GM12878 (cell line): ENCODE measurements at regions of chr12 and their contacts with region 1.

Region 1: DNA sequence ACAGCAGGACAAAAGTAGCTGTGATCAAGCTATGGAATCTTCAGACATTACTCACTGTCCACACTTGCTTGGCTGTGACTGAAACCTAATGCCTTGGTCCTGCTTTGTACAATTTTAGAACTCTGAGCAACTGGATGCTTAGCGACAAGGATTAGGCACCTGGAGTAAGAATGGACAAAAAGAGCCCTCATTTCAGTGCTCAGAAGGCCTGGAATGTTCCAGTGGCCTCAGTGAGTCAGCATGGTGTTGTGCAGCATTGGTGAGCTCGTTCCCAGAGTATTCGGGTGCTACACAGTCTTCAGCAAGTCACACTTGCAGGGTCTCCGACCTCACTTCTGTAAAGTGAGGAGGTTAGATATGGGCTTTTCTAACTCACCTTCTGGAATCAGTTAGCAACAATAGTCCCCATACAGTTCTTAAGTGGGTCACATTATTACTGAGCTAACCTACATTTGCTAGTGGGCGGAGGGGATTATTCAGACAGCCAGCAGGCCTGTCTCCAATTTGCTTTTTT is 108.0 kb upstream of the MDM1 start:
- DNase-seq: no peak
- ATAC-seq: peak; percentile 38
- H3K4me3 ChIP-seq: no peak overlapping the region
- H3K27ac ChIP-seq: no peak overlapping the region
- H3K4me1 ChIP-seq: peaks cover 7% of the 10 kb centered on the region
- H3K27me3 ChIP-seq: no peaks in the 10 kb centered on the region
- CTCF ChIP-seq: no peak
- EP300 ChIP-seq: no peak
- POLR2A ChIP-seq: no peak
- RAD21 ChIP-seq: no peak

Region 2: GRCh38 chr12:68364893-68365725 is 75.0 kb before region 1 on chr12:
- CTCF ChIA-PET with region 1: interaction called, 14 read pairs
- POLR2A ChIA-PET with region 1: interaction called, 16 read pairs
- RAD21 ChIA-PET with region 1: interaction called, 37 read pairs
- SMC1A ChIA-PET with region 1: interaction called, 21 read pairs
- in situ Hi-C with region 1: no loop called
- intact Hi-C with region 1: loop called (anchors 5 kb)
- DNase-seq: peak; percentile 97
- ATAC-seq: peak; percentile 89
- H3K4me3 ChIP-seq: peak overlapping the region; percentile 53
- H3K27ac ChIP-seq: peak overlapping the region; percentile 94
- H3K4me1 ChIP-seq: peaks cover 23% of the 10 kb centered on the region
- H3K27me3 ChIP-seq: no peaks in the 10 kb centered on the region
- CTCF ChIP-seq: no peak
- EP300 ChIP-seq: peak; percentile 52 to 59; a peak in 3 of 4 replicates
- POLR2A ChIP-seq: peak; percentile 79
- RAD21 ChIP-seq: peak; percentile 10; the same call in 1 of the 2 replicates

Region 3: DNA sequence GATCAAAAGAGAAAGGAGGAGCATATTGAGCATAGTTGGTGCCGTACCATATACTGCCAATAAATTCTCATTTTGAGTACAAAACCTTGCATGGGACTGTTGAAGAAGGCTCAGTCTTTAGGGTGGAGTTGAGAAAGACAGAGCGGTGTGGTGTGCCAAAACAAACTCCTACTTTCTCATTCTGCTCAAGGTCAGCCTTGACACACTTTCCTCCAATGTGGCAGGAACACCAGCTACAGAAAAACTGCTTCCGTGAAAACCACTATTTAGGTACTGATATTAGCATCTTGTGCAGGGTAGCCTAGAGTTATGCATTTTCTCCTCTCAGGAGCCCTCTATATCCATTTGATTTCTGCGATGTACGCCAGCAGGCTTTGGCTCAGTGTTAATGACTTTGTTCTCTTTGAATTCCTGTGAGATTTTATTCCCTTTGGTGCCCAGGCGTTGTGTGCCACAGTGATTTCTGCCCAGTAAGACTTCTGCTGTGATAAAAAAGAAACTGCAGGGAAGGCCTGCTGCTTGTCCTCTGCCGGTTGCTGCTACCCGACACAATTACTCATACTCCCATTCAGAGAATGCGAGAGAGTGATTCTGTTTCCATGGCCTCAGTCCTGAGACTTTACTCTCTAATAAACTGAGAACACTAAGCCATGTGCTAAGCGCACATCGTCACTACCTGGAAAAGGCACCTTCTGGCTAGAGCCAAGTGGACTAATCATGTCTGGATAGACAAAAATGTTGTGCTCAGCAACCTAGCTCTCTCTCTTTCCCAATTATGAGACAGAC is 19.7 kb before region 1 on chr12:
- CTCF ChIA-PET with region 1: interaction called, 5 read pairs
- POLR2A ChIA-PET with region 1: interaction called, 8 read pairs
- RAD21 ChIA-PET with region 1: interaction called, 41 read pairs
- SMC1A ChIA-PET with region 1: interaction called, 81 read pairs
- in situ Hi-C with region 1: no loop called
- intact Hi-C with region 1: no loop called
- DNase-seq: no peak
- ATAC-seq: no peak
- H3K4me3 ChIP-seq: no peak overlapping the region
- H3K27ac ChIP-seq: no peak overlapping the region
- H3K4me1 ChIP-seq: no peaks in the 10 kb centered on the region
- H3K27me3 ChIP-seq: no peaks in the 10 kb centered on the region
- CTCF ChIP-seq: no peak
- EP300 ChIP-seq: no peak
- POLR2A ChIP-seq: no peak
- RAD21 ChIP-seq: no peak

Region 4: GRCh38 chr12:68451261-68452077 is 11.3 kb after region 1 on chr12:
- CTCF ChIA-PET with region 1: interaction called, 4 read pairs
- POLR2A ChIA-PET with region 1: interaction called, 30 read pairs
- RAD21 ChIA-PET with region 1: interaction called, 23 read pairs
- SMC1A ChIA-PET with region 1: interaction called, 20 read pairs
- in situ Hi-C with region 1: no loop called
- intact Hi-C with region 1: no loop called
- DNase-seq: peak; percentile 88
- ATAC-seq: peak; percentile 78
- H3K4me3 ChIP-seq: peak overlapping the region; percentile 51
- H3K27ac ChIP-seq: peak overlapping the region; percentile 73
- H3K4me1 ChIP-seq: peaks cover 36% of the 10 kb centered on the region
- H3K27me3 ChIP-seq: no peaks in the 10 kb centered on the region
- CTCF ChIP-seq: no peak
- EP300 ChIP-seq: peak; percentile 32 to 50; a peak in 2 of 4 replicates
- POLR2A ChIP-seq: no peak
- RAD21 ChIP-seq: no peak

Region 5: DNA sequence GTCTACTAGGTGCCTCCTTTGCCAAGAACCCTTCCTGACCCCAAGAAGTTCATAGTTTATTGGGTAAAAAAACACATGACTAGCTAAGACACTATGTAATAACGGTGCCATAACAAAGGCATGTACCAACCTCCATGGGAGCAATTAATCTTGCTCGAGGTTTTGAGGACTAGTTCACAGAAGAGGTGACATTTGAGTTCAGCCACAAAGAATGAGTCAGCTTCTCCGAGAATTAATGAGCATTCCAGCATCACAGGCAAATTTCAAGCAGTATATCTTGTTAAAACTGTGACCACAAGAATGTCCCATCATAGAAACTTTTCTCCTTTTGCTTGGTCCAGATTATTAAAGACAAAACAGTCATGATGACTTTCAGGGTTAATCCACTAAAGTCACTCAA is 57.6 kb after region 1 on chr12:
- CTCF ChIA-PET with region 1: interaction called, 6 read pairs
- POLR2A ChIA-PET with region 1: no interaction called
- RAD21 ChIA-PET with region 1: interaction called, 8 read pairs
- SMC1A ChIA-PET with region 1: interaction called, 10 read pairs
- in situ Hi-C with region 1: no loop called
- intact Hi-C with region 1: no loop called
- DNase-seq: peak; percentile 50
- ATAC-seq: peak; percentile 82
- H3K4me3 ChIP-seq: no peak overlapping the region
- H3K27ac ChIP-seq: no peak overlapping the region
- H3K4me1 ChIP-seq: peaks cover 27% of the 10 kb centered on the region
- H3K27me3 ChIP-seq: no peaks in the 10 kb centered on the region
- CTCF ChIP-seq: no peak
- EP300 ChIP-seq: no peak
- POLR2A ChIP-seq: no peak
- RAD21 ChIP-seq: no peak

Region 6: GRCh38 chr12:68538726-68539614 is 98.8 kb after region 1 on chr12:
- CTCF ChIA-PET with region 1: interaction called, 4 read pairs
- POLR2A ChIA-PET with region 1: no interaction called
- RAD21 ChIA-PET with region 1: interaction called, 4 read pairs
- SMC1A ChIA-PET with region 1: interaction called, 10 read pairs
- in situ Hi-C with region 1: no loop called
- intact Hi-C with region 1: no loop called
- DNase-seq: peak; percentile 59
- ATAC-seq: peak; percentile 96
- H3K4me3 ChIP-seq: no peak overlapping the region
- H3K27ac ChIP-seq: no peak overlapping the region
- H3K4me1 ChIP-seq: peaks cover 3% of the 10 kb centered on the region; the same call in 1 of the 2 replicates
- H3K27me3 ChIP-seq: no peaks in the 10 kb centered on the region
- CTCF ChIP-seq: no peak
- EP300 ChIP-seq: peak in 1 of 2 experiments; percentile 77; a peak in 1 of 4 replicates
- POLR2A ChIP-seq: no peak
- RAD21 ChIP-seq: no peak

Region 7: GRCh38 chr12:68565375-68565903 is 125.3 kb after region 1 on chr12:
- CTCF ChIA-PET with region 1: no interaction called
- POLR2A ChIA-PET with region 1: no interaction called
- RAD21 ChIA-PET with region 1: no interaction called
- SMC1A ChIA-PET with region 1: no interaction called
- in situ Hi-C with region 1: no loop called
- intact Hi-C with region 1: no loop called
- DNase-seq: no peak
- ATAC-seq: no peak
- H3K4me3 ChIP-seq: no peak overlapping the region
- H3K27ac ChIP-seq: no peak overlapping the region
- H3K4me1 ChIP-seq: no peaks in the 10 kb centered on the region
- H3K27me3 ChIP-seq: no peaks in the 10 kb centered on the region
- CTCF ChIP-seq: no peak
- EP300 ChIP-seq: no peak
- POLR2A ChIP-seq: no peak
- RAD21 ChIP-seq: no peak